CD14-positive monocyte (primary cell): ENCODE measurements at regions of chr14 and their contacts with region 1.

Region 1: DNA sequence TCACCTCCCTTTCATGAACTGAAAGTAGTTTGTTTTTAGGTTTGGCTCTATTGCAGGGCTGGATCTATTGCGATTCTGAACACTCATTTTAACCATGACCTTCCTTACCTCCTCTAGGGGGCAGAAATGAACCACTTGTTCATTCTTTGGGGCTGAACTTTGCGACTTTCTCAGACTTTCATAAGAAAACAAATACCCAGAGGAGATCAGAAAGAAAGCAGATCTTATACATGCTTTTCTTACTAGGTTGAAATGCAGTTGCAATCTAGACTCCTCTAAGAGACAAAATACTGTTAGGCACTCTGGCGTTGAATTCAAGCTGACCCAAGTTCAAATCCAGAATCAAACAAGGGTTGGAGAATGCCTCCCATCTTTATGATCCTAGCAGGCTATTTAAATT is 32.6 kb upstream of the PLEKHG3 start:
- DNase-seq: peak; percentile 50 to 68 (median 64)
- H3K4me3 ChIP-seq: no peak overlapping the region
- H3K4me3 Mint-ChIP-seq: no peak overlapping the region
- H3K27ac ChIP-seq: no peak overlapping the region
- H3K27ac Mint-ChIP-seq: no peak overlapping the region
- H3K4me1 ChIP-seq: peaks cover 42 to 49% of the 10 kb centered on the region in 2 donors
- H3K4me1 Mint-ChIP-seq: peaks cover 47% of the 10 kb centered on the region
- H3K27me3 ChIP-seq: no peaks in the 10 kb centered on the region
- H3K27me3 Mint-ChIP-seq: peaks cover 0 to 7% (median 1%) of the 10 kb centered on the region in 3 donors
- CTCF ChIP-seq: peak; percentile 74

Region 2: DNA sequence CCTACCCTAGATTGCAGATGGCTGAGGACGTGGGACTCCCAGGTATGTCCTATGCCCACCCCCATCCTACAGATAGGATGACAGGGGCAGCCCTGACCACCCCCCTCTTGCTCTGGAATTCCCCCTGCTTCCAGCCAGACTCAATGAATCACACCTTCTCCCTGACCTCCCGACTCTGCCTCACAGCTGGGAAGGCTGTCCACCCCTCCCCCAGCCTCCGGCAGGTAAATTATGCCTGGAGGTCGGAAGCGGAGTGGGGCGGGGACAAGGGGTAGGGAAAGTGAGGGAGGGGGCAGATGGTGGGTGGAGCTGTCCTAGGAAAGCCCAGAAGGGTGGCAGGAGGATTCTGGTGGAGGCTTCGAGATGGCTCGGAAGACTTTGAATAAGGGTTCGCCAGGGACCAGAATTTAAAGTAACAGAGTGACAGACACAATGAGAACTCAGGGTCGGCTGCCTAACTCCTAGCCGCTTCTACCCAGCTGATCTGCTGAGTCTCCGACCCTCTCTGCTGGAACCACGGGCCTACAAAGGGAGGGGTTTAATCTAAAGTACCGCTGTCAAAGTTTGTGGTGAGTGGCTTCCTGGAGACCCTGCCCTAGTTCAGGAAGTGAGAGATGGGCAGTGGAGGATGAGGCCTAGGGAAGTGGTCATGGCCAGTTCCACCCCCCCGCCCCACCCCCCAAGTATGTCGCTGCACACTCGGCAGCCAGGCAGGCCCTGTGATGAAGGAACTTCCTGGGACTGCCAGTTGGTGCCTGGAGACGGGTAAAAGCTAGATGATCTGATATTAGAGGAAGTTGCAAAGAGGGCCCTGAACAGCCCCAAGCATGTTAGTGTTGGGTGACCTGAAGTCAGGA is 36.8 kb after region 1 on chr14:
- intact Hi-C with region 1: loop called (anchors 5 kb)
- DNase-seq: peak; percentile 91 to 95 (median 92)
- H3K4me3 ChIP-seq: peak overlapping the region in 2 of 3 experiments; percentile 6 to 56
- H3K4me3 Mint-ChIP-seq: peak overlapping the region; percentile 66 to 76
- H3K27ac ChIP-seq: peak overlapping the region; percentile 85 to 86
- H3K27ac Mint-ChIP-seq: peak overlapping the region; percentile 93 to 98 (median 96)
- H3K4me1 ChIP-seq: peaks cover 69 to 82% of the 10 kb centered on the region in 2 donors
- H3K4me1 Mint-ChIP-seq: peaks cover 68% of the 10 kb centered on the region
- H3K27me3 ChIP-seq: peaks cover 3 to 6% of the 10 kb centered on the region in 2 donors
- H3K27me3 Mint-ChIP-seq: peaks cover 3 to 16% (median 4%) of the 10 kb centered on the region in 3 donors
- CTCF ChIP-seq: no peak

Region 3: GRCh38 chr14:64764641-64765520 is 93.3 kb after region 1 on chr14:
- intact Hi-C with region 1: loop called (anchors 1 to 2 kb)
- DNase-seq: peak; percentile 53 to 67 (median 64)
- H3K4me3 ChIP-seq: peak overlapping the region in 1 of 3 experiments; percentile 60
- H3K4me3 Mint-ChIP-seq: peak overlapping the region; percentile 75 to 89
- H3K27ac ChIP-seq: no peak overlapping the region
- H3K27ac Mint-ChIP-seq: peak overlapping the region in 2 of 7 donors; percentile 81 to 83
- H3K4me1 ChIP-seq: peaks cover 6 to 10% of the 10 kb centered on the region in 2 donors
- H3K4me1 Mint-ChIP-seq: peaks cover 25% of the 10 kb centered on the region
- H3K27me3 ChIP-seq: peaks cover 0 to 28% of the 10 kb centered on the region in 2 donors
- H3K27me3 Mint-ChIP-seq: peaks cover 27 to 43% (median 38%) of the 10 kb centered on the region in 3 donors
- CTCF ChIP-seq: peak; percentile 85

Region 4: GRCh38 chr14:64788668-64789067 is 117.1 kb after region 1 on chr14:
- intact Hi-C with region 1: no loop called
- DNase-seq: no peak
- H3K4me3 ChIP-seq: no peak overlapping the region
- H3K4me3 Mint-ChIP-seq: no peak overlapping the region
- H3K27ac ChIP-seq: no peak overlapping the region
- H3K27ac Mint-ChIP-seq: no peak overlapping the region
- H3K4me1 ChIP-seq: no peaks in the 10 kb centered on the region
- H3K4me1 Mint-ChIP-seq: no peaks in the 10 kb centered on the region
- H3K27me3 ChIP-seq: no peaks in the 10 kb centered on the region
- H3K27me3 Mint-ChIP-seq: peaks cover 3 to 9% (median 6%) of the 10 kb centered on the region in 3 donors
- CTCF ChIP-seq: no peak